A673 (cell line): ENCODE measurements at regions of chr1 and their contacts with region 1.

Region 1: DNA sequence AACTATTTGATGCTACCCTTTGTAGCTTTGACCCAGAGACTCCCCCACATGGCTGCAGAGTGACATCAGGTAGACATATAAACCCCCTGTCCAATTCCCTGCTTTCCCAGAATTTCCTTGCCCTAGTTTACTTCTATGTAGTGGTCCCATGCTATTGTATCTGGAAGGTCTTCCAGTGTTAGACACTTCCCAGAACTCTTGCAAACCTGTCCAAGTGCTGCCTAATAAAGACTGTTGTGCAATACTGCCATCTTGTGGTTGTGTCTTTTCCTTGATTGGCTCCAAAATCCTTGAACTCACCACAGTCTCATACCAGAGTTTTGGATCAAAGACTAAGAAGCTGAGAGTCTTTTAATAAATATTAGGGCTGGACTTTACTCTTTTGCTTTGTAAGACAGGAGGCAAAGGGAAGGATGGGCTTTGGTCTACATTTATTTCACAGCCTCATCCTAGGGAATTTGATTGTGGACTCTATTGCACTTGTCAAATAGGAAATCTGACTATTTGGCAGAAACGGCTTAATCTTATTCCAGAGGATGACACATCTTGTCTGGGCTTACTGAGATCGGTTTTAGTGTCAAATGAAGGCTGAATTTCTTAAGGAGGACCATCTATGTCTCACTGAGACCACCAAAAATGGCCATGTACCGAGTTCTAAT is 169.9 kb downstream of the LRRC7 start:
- DNase-seq: peak; percentile 84
- H3K4me3 ChIP-seq: no peak overlapping the region
- H3K27ac ChIP-seq: no peak overlapping the region
- H3K4me1 ChIP-seq: peaks cover 5% of the 10 kb centered on the region
- H3K27me3 ChIP-seq: no peaks in the 10 kb centered on the region
- CTCF ChIP-seq: peak; percentile 82

Region 2: DNA sequence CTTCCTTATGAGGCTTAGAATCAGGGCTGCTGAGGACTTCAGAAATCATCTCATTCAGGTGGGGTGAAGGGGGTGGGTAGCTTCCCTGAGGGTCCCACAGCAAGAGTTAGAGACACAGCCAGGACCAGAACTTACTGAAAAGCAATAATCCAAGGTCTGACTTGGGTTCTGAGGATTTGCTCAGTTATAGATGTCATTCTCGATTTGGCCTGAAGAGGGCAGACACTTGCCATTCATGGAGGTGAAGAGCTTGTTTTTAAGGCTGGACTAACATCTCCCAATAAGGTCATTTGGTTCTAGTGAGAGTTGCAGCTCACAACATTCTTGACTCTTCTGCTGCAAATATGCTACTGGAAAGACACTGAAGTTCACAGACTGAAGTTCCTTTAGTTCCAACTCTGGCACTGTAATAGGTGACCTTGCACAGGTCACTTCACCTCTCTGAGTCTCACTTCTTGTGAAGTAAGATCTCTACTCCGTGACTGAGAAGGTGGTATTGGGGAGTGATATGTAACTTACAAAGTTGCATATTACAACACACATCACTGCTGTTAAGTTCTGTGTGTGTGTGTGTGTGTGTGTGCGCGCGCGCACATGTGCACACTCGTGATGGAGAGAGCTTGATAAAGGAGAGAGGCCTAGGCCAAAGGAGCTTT is 1617.4 kb before region 1 on chr1:
- CTCF ChIA-PET with region 1: interaction called, 4 read pairs
- POLR2A ChIA-PET with region 1: no interaction called
- intact Hi-C with region 1: loop called (anchors 10 kb)
- DNase-seq: peak; percentile 75
- H3K4me3 ChIP-seq: no peak overlapping the region
- H3K27ac ChIP-seq: no peak overlapping the region
- H3K4me1 ChIP-seq: peaks cover 3% of the 10 kb centered on the region
- H3K27me3 ChIP-seq: no peaks in the 10 kb centered on the region
- CTCF ChIP-seq: peak; percentile 78

Region 3: DNA sequence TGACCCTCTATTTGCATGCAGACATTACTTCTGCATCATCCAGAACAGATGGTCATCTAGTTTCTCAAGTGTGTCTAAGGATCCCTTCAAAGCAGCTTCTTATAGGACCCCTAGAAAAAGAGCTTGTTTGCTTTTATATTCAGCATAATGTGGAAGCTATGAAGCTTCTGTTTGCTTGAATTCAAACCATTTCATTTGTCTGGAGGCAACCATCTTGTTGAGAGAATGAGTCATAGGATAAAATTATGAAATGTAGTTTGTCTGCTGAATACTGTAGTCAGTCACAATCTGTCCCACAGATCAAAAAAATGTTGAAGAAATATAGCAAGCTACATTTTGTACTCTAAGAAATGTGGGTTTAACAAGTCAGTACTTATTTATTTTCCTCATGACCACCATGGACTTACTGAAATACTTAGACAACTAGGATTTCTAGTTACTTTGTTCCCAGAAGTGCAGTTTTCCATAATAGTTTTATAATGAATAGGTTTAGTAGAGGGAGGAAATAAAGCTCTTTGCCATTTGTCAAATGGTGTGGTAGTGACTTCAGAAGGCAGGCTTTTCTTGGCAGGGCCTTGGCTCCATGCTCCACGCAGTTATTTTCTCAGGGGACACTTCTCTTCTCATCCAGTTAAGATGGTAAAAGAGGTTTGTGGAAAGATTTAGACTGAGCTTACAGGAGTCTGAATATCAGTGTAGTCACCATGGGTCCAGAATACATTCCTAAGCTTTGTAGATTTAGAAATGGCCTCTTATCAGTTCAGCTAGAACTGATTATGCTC is 1166.0 kb before region 1 on chr1:
- CTCF ChIA-PET with region 1: no interaction called
- POLR2A ChIA-PET with region 1: no interaction called
- intact Hi-C with region 1: loop called (anchors 10 kb)
- DNase-seq: no peak
- H3K4me3 ChIP-seq: no peak overlapping the region
- H3K27ac ChIP-seq: no peak overlapping the region
- H3K4me1 ChIP-seq: no peaks in the 10 kb centered on the region
- H3K27me3 ChIP-seq: no peaks in the 10 kb centered on the region
- CTCF ChIP-seq: no peak

Region 4: GRCh38 chr1:68782890-68783289 is 954.8 kb before region 1 on chr1:
- CTCF ChIA-PET with region 1: no interaction called
- POLR2A ChIA-PET with region 1: no interaction called
- intact Hi-C with region 1: loop called (anchors 2 kb)
- DNase-seq: no peak
- H3K4me3 ChIP-seq: no peak overlapping the region
- H3K27ac ChIP-seq: no peak overlapping the region
- H3K4me1 ChIP-seq: no peaks in the 10 kb centered on the region
- H3K27me3 ChIP-seq: no peaks in the 10 kb centered on the region
- CTCF ChIP-seq: peak; percentile 32; the same call in 1 of the 2 replicates

Region 5: DNA sequence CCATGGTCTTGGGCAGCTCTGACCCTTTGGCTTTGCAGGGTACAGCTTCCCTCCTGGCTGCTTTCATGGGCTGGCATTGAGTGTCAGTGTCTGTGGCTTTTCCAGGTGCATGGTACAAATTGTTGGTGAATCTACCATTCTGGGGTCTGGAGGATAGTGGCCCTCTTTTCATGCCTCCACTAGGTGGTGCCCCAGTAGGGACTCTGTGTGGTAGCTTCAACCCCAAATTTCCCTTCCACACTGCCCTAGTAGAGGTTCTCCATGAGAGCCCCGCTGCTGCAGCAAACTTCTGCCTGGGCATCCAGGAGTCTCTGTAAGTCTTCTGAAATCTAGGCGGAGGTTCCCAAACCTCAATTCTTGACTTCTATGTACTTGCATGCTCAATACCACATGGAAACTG is 664.5 kb before region 1 on chr1:
- CTCF ChIA-PET with region 1: no interaction called
- POLR2A ChIA-PET with region 1: no interaction called
- intact Hi-C with region 1: loop called (anchors 10 kb)
- DNase-seq: peak; percentile 9
- H3K4me3 ChIP-seq: no peak overlapping the region
- H3K27ac ChIP-seq: no peak overlapping the region
- H3K4me1 ChIP-seq: no peaks in the 10 kb centered on the region
- H3K27me3 ChIP-seq: no peaks in the 10 kb centered on the region
- CTCF ChIP-seq: peak; percentile 30; the same call in 1 of the 2 replicates

Region 6: GRCh38 chr1:69519006-69519405 is 218.7 kb before region 1 on chr1:
- CTCF ChIA-PET with region 1: no interaction called
- POLR2A ChIA-PET with region 1: no interaction called
- intact Hi-C with region 1: no loop called
- DNase-seq: no peak
- H3K4me3 ChIP-seq: no peak overlapping the region
- H3K27ac ChIP-seq: no peak overlapping the region
- H3K4me1 ChIP-seq: no peaks in the 10 kb centered on the region
- H3K27me3 ChIP-seq: no peaks in the 10 kb centered on the region
- CTCF ChIP-seq: no peak

Region 7: DNA sequence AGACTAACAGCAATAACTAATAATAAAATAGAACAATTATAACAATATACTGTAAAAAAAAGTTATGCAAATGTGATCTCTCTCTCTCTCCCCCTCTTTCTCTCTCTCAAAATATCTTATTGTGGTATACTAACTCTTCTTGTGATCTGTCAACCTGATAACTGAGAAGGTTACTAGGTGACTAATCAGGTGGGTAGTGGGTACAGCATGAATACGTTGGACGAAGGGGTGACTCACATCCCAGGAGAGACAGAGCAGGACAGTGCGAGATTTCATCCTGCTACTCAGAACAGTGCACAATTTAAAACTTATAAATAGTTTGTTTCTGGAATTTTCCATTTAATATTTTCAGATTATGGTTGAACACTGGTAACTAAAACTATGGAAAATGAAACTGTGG is 210.2 kb after region 1 on chr1:
- CTCF ChIA-PET with region 1: no interaction called
- POLR2A ChIA-PET with region 1: no interaction called
- intact Hi-C with region 1: no loop called
- DNase-seq: no peak
- H3K4me3 ChIP-seq: no peak overlapping the region
- H3K27ac ChIP-seq: no peak overlapping the region
- H3K4me1 ChIP-seq: peaks cover 7% of the 10 kb centered on the region
- H3K27me3 ChIP-seq: no peaks in the 10 kb centered on the region
- CTCF ChIP-seq: no peak